ENCODE measurements at regions of chr10 and their contacts with region 1.

Region 1: DNA sequence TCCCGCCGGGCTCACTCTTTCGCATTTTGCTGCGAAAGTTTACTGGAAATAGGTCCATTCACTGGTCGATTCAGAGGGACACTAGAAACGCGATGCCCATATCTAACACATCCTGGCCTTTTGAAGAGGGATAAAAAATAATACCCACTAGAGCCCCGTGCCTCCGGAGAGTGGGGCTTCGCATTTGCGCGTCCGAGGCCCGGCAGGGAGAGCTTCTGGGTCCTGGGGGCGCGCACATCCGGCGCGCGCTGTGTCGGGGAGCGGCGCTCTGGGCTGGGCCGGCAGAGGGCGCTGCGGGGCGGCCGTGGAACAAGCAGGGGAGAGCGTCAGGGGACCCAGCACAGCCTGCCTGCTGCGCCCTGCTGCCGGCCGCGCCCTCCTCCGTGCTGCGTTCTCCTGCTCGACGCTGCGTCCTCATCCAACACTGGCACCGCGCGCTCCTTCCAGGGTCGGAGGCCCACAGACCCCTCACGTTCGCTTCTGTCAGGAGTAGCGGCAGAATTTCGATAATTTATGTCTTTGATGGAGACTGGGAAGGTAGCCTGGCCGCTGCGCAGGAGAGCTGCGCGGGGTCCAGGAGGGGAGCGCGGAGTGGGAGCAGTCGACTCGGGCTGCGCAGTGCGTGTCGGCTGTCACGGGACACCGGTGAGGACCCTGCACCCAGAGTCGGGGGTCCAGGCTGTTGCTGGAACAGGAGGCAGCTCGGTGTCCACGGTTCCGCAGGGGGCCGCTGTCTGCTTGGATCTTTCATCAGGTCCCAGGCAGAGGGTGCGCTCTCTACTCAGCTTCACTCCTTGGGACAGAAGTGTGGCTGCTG is 41.5 kb upstream of the ZNF32 start:
- DNase-seq: peak; percentile 96
- H3K4me3 ChIP-seq: peak overlapping the region; percentile 46 to 68
- H3K27ac ChIP-seq: peak overlapping the region in 1 of 2 experiments; percentile 12; a peak in 1 of 4 replicates
- H3K4me1 ChIP-seq: peaks cover 0 to 10% of the 10 kb centered on the region in 2 experiments; a peak in 1 of 4 replicates
- H3K27me3 ChIP-seq: no peaks in the 10 kb centered on the region
- CTCF ChIP-seq: peak; percentile 78
- EP300 ChIP-seq: no peak
- RAD21 ChIP-seq: peak; percentile 80

Region 2: GRCh38 chr10:43427166-43427825 is 262.9 kb before region 1 on chr10:
- CTCF ChIA-PET with region 1: no interaction called
- POLR2A ChIA-PET with region 1: no interaction called
- DNase-seq: no peak
- H3K4me3 ChIP-seq: no peak overlapping the region
- H3K27ac ChIP-seq: no peak overlapping the region
- H3K4me1 ChIP-seq: no peaks in the 10 kb centered on the region
- H3K27me3 ChIP-seq: no peaks in the 10 kb centered on the region
- CTCF ChIP-seq: no peak
- EP300 ChIP-seq: no peak
- RAD21 ChIP-seq: no peak

Region 3: GRCh38 chr10:43557214-43557613 is 132.9 kb before region 1 on chr10:
- CTCF ChIA-PET with region 1: no interaction called
- POLR2A ChIA-PET with region 1: no interaction called
- DNase-seq: no peak
- H3K4me3 ChIP-seq: no peak overlapping the region; a peak in 1 of 4 replicates
- H3K27ac ChIP-seq: no peak overlapping the region
- H3K4me1 ChIP-seq: no peaks in the 10 kb centered on the region
- H3K27me3 ChIP-seq: no peaks in the 10 kb centered on the region
- CTCF ChIP-seq: no peak
- EP300 ChIP-seq: no peak
- RAD21 ChIP-seq: no peak

Region 4: DNA sequence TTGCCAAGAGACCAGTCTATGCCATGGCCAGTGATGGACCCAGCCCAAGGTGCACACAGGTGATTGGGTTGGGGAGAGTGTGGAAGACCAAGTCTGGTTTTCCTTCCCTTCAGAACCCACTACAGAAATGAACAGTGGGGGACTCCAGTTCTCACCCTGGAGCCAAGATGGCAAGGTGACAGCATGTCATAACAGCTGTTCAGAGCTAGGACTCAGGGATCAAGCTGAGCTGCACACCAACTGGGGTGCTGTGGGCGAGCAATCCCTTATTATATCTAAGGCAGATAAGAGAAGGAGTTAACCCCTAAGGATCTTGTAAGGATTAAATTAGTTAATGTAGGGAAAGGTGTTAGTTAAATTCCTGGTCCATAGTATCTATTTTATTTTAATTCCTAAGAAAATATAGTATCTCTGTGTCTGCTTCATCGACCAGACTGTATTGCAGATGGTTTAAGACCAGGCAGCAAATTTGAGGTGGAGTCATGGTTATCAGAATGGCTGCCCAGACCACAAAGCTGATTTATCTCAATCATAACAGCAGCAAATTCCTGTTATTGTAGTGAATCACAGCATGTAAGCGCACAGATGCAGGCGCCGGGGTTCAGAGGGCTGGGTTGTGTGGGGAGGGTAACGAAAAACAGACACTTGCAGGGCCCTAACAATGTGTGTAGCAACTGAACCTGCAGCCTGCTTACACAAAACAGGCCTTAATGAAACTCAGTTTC is 167.2 kb after region 1 on chr10:
- CTCF ChIA-PET with region 1: interaction called, 12 read pairs
- POLR2A ChIA-PET with region 1: no interaction called
- DNase-seq: peak; percentile 69
- H3K4me3 ChIP-seq: no peak overlapping the region
- H3K27ac ChIP-seq: peak overlapping the region; percentile 47 to 94
- H3K4me1 ChIP-seq: peaks cover 0 to 54% of the 10 kb centered on the region in 2 experiments; a peak in 2 of 4 replicates
- H3K27me3 ChIP-seq: no peaks in the 10 kb centered on the region
- CTCF ChIP-seq: no peak
- EP300 ChIP-seq: peak; percentile 89 to 93
- RAD21 ChIP-seq: peak; percentile 28; the same call in 1 of the 2 replicates

Region 5: DNA sequence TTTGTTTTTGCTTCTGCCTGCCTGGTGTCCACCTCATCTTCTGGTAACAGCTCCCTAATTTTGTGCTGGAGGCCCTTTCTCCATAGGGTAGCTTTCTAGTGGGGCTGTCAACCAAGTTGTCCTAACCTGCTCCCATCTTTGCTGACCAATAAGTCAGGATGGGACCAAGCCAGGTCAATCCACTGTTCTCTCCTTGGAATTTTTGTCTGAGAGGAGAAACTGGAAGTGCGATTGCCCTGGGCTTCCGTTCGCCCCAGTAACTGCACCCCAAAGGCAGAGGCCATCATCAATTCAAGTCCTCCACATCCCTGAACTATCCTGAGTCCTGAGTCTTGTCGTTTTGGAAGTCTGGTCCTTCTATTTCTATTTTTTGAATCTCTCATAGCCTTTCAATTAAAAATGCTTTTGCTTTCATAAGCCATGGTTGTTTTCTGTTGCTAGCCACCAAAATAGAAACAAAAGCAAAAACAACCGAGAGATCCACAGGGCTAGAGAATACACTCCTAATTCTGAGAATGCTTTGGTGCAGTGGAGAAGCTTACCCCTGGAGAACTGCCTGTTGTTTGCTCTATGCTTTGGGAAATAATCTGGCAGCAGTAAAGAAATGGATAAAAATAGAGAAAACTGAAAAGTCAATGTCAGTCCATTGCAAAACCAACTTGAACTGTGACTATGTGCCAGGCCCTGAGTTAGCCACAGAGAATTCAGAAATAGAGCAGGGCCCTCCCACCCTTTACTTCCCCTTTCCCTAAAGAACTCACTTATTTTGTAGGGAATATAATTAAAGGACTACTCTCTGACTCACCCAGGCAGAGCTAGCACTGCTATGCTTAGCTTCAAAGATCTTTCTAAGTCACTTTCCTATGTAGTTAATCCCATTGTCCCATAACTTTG is 326.7 kb after region 1 on chr10:
- CTCF ChIA-PET with region 1: interaction called, 10 read pairs
- POLR2A ChIA-PET with region 1: no interaction called
- DNase-seq: no peak
- H3K4me3 ChIP-seq: no peak overlapping the region
- H3K27ac ChIP-seq: no peak overlapping the region
- H3K4me1 ChIP-seq: peaks cover 0 to 13% of the 10 kb centered on the region in 2 experiments; a peak in 1 of 4 replicates
- H3K27me3 ChIP-seq: no peaks in the 10 kb centered on the region
- CTCF ChIP-seq: no peak
- EP300 ChIP-seq: no peak
- RAD21 ChIP-seq: no peak

Region 6: DNA sequence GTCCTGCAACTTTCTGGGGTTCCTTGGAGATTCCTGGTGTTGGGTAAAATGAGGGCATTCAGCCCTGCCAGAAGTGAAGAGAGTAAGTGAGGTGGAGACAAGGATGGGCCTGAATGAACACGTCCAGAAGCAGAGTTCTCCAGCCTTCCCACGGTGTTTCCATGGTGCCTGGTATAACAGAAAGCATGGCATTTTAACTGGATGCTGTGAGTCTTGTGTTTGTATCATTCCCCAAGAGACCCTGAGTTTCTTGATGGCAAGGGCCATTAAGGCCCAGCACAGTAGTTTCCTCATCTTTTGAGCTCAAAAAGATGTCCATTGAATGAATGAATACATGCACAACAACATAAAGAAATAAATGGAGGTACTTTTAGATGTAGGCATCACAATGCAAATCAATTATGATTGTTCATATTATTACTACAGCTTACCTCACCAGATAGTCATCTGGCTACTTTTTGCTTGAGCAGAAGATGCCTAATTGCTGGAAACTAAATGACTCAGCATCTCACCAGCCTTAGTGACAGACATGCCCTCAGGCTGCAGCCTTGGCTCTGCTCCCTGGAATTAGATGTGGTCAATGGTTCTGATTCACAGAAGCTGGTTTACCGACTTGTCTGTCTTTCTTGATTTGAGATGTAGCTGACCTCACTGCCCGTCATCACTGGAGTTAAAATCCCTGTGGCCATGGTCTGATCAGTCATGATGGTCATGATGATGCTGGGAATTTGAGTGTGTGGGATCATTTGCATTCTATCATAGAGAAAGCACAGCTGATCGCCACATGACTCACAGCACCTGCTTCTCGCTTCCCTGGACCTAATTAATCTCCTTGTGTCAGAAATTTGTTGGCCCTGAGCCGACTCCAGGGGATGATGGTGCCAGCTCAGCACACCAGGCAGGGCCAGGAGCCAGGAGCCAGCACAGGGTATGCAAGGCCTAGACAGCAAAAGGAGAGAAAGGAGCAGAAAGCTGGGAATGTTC is 610.8 kb after region 1 on chr10:
- CTCF ChIA-PET with region 1: interaction called, 22 read pairs
- POLR2A ChIA-PET with region 1: no interaction called
- DNase-seq: peak; percentile 55
- H3K4me3 ChIP-seq: no peak overlapping the region
- H3K27ac ChIP-seq: peak overlapping the region; percentile 73 to 74
- H3K4me1 ChIP-seq: peaks cover 0 to 26% of the 10 kb centered on the region in 2 experiments; a peak in 2 of 4 replicates
- H3K27me3 ChIP-seq: no peaks in the 10 kb centered on the region
- CTCF ChIP-seq: no peak
- EP300 ChIP-seq: 0 out of 4 replicates have a peak, but pooled peaks of 1 of the 2 experiments have one; percentile 27
- RAD21 ChIP-seq: no peak

Region 7: DNA sequence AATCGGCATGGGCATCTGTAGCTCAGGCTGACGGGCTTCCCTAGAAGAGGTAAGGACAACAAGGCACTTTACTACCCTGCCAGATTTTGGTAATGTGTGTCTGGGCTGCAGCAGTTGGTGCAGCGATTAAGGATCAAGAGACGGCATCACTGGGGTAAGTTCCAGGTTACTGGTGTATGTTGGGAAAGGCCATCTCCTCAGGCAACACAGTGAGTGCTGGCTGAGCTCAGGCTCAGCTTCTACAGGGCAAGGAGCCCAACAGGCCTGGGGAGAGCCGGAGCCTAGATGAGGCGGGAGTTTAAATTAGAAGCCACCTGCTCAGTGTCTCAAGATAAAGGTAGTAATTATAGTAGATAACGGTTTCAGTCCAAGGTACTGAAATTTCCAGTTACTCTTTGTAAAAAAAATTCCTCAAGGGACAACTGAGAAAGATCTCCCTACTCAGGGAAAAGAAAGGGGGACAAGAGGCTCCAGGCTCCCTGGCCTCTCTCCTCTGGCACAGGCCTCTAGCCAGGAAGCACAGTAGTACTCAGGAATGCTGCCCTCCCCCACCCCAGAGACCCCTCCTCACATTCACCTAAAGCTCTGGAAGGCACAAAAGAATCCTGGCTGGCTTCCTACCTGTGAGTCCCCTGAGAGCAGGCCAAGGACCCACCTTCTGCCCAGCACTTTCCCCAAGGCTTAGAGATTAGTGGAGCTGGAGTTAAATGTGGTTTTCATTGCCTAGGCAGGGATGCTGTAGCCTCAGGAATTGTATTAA is 690.9 kb after region 1 on chr10:
- CTCF ChIA-PET with region 1: interaction called, 117 read pairs
- POLR2A ChIA-PET with region 1: interaction called, 7 read pairs
- DNase-seq: peak; percentile 37
- H3K4me3 ChIP-seq: no peak overlapping the region
- H3K27ac ChIP-seq: no peak overlapping the region
- H3K4me1 ChIP-seq: peaks cover 0 to 8% of the 10 kb centered on the region in 2 experiments; a peak in 1 of 4 replicates
- H3K27me3 ChIP-seq: peaks cover 6% of the 10 kb centered on the region; the same call in 1 of the 2 replicates
- CTCF ChIP-seq: no peak
- EP300 ChIP-seq: no peak
- RAD21 ChIP-seq: no peak